PC-3 (cell line): ENCODE measurements at regions of chr6 and their contacts with region 1.

Region 1: GRCh38 chr6:69069881-69070280 is 434.8 kb downstream of the ADGRB3 start:
- DNase-seq: no peak
- ATAC-seq: no peak
- H3K4me3 ChIP-seq: no peak overlapping the region
- H3K27ac ChIP-seq: no peak overlapping the region
- H3K4me1 ChIP-seq: no peaks in the 10 kb centered on the region
- H3K27me3 ChIP-seq: no peaks in the 10 kb centered on the region
- CTCF ChIP-seq: no peak

Region 2: DNA sequence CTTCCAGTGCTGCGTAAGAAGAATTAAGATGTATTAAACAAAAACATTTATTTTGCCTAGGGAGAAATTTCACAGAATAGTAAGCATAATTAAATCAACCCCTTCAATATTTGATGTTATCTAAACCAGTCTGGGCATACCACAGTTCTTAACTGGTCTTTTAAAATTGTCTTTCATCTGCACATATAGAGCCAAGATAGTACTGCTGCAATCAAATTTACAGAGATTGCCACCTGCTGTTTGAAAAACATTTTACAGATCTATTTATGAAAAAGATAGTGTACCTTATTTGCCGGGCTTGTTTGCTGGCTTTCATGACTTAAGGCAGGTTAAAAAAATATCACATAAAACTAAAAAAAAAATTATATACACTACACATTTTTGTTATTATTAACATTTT is 111.6 kb before region 1 on chr6:
- CTCF ChIA-PET with region 1: no interaction called
- POLR2A ChIA-PET with region 1: no interaction called
- intact Hi-C with region 1: no loop called
- DNase-seq: peak; percentile 15
- ATAC-seq: no peak
- H3K4me3 ChIP-seq: no peak overlapping the region
- H3K27ac ChIP-seq: no peak overlapping the region
- H3K4me1 ChIP-seq: no peaks in the 10 kb centered on the region
- H3K27me3 ChIP-seq: no peaks in the 10 kb centered on the region
- CTCF ChIP-seq: peak; percentile 41; the same call in 1 of the 2 replicates

Region 3: DNA sequence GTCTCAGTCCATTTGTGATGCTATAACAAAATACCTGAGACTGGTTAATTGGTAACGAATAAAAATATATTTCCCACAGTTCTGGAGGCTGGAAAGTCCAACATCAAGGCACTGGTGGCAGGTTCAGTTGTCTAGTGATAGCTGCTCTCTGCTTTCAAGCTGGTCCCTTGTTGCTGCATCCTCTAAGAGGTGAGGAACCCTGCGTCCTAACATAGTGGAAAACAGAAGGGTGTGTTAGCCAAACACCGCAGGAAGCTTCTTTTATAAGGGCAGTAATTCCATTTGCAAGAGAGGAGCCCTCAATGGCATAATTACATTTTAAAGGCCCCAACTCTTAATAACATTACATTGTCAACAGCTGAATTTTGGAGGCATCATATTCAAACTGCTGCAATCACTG is 62.1 kb before region 1 on chr6:
- CTCF ChIA-PET with region 1: no interaction called
- POLR2A ChIA-PET with region 1: interaction called, 13 read pairs
- intact Hi-C with region 1: no loop called
- DNase-seq: no peak
- ATAC-seq: no peak
- H3K4me3 ChIP-seq: no peak overlapping the region
- H3K27ac ChIP-seq: no peak overlapping the region
- H3K4me1 ChIP-seq: no peaks in the 10 kb centered on the region
- H3K27me3 ChIP-seq: no peaks in the 10 kb centered on the region
- CTCF ChIP-seq: no peak